ENCODE measurements at regions of chr17 and their contacts with region 1.

Region 1: DNA sequence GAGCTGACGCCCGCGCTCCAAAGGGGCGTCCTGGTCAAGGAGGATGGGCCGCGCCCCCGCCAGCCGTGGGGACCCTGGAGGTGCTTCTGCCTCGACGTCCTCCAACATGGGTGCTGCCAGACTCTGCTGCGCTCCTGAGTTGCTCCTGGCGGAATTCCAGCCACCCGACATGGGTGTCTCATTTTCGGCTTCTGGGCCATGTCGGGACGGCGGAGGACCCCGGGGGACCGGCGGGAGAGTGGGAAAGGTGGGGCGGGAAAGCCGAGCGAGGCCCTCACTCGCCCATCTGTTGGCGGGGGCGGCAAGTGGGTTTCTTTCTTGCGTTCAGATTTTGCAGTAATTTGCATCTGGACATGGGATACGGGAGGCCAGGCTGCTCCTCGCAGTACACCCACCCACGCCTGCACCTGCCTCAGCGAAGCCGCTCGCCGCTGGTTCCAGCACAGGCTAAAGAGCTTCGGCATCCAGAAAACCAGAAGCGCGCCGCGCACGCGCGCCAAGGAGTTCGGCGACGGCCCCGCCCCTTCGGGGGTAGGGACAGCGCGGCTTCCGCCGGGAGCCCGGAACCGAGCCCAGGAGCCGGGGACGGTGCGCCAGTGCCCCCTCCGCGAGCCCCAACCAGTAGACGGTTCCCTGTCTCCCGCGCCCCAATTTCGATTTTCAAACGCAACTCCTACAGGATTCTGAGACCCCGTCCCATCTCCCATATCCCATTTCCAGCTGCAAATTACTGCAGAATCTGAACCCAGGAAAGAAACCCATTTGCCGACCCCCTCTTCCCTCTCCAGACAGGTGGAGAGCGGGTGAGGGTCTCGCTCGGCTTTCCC is at the start of gene ARMC7:
- DNase-seq: peak; percentile 72
- ATAC-seq: peak; percentile 76
- H3K4me3 ChIP-seq: peak within 1 kb of the TSS; percentile 81 to 91
- H3K27ac ChIP-seq: peak within 1 kb of the TSS; percentile 72
- H3K4me1 ChIP-seq: peaks cover 19 to 51% of the 10 kb centered on the region in 2 experiments
- H3K27me3 ChIP-seq: no peaks in the 10 kb centered on the region
- CTCF ChIP-seq: no peak
- POLR2A ChIP-seq: peak; percentile 87
- RAD21 ChIP-seq: peak; percentile 39
- total RNA-seq, gene ARMC7: 43.2 TPM

Region 2: DNA sequence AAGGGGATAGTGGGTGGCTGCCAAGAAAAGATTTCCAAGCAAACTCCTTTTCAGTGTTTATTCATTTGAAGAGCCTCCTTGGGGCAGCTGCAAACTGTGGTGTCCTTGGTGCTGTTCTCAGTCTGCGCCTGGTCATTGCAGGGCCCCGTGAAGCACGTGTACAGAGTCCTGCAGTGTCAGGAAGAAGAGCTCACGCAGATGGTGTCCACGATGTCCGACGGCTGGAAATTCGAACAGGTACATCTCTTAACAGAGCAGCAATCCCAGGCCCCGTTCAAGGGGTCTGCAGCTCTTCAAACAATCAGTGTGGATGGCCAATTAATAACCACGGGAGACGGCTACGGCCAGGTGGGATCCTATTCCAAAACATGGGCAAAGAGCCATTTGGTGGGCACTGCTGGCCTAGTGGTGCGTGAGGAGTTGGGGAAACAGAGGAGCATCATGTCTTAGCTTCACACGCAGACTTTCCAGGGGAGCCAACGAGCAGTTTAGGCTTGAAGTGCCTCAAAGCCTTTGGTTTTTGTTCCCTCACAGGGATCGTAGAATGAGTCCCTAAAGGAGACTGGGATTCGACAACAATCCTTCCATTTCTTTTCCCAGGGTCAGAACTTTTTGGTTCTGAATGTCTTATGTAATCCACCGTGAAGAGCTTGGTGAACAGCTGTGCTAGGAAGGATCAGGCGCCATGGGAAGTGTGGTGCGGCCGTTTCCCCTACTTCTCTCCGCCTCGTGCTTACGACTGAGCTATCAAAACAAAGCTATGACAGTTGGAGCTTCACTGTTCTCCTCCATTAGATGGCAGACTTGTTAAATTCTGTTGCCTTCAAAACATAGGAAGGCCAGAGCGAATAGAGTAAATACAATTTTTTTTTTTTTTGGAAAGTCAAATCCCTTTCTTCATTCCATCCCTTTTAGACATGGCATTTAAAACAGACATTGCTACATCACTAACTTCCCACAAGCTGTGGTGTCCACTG is 50.0 kb before region 1 on chr17:
- CTCF ChIA-PET with region 1: interaction called, 16 read pairs
- POLR2A ChIA-PET with region 1: interaction called, 5 read pairs
- RAD21 ChIA-PET with region 1: interaction called, 4 to 9 read pairs
- intact Hi-C with region 1: loop called (anchors 10 kb)
- DNase-seq: no peak
- ATAC-seq: peak; percentile 67; the same call in 1 of the 2 replicates
- H3K4me3 ChIP-seq: no peak overlapping the region
- H3K27ac ChIP-seq: no peak overlapping the region
- H3K4me1 ChIP-seq: peaks cover 0 to 4% of the 10 kb centered on the region in 2 experiments; a peak in 1 of 4 replicates
- H3K27me3 ChIP-seq: no peaks in the 10 kb centered on the region
- CTCF ChIP-seq: peak; percentile 39 to 54 (median 41); a peak in 5 of 6 replicates
- POLR2A ChIP-seq: no peak
- RAD21 ChIP-seq: peak; percentile 69

Region 3: DNA sequence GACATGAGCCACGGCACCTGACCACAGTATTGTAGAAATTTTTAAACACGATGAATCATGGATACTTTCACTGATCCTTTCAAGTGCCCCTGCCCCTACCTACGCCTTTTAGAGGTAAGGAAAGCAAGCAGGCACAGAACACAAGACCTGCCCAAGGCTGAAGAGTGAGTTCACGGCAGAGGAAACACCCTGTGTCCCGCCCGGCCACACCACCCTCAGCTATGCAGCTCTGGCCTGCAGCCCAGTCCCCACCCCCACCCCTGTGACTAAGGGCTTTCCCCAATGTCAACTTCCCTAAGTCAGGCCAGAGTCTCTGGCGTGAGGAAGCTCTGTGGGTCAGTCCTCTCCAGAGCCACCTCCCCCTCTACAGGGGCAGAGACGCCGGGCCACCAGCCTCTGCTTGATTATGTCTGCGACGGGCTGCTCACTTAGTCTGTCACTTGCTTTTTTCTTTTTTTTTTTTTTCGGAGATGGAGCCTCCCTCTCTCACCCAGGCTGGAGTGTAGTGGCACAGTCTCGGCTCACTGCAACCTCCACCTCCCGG is 13.5 kb before region 1 on chr17:
- CTCF ChIA-PET with region 1: interaction called, 15 read pairs
- POLR2A ChIA-PET with region 1: interaction called, 5 read pairs
- RAD21 ChIA-PET with region 1: interaction called, 3 read pairs
- intact Hi-C with region 1: no loop called
- DNase-seq: peak; percentile 95
- ATAC-seq: peak; percentile 91
- H3K4me3 ChIP-seq: peak overlapping the region; percentile 23 to 32; a peak in 3 of 4 replicates
- H3K27ac ChIP-seq: peak overlapping the region; percentile 94
- H3K4me1 ChIP-seq: peaks cover 55 to 67% of the 10 kb centered on the region in 2 experiments
- H3K27me3 ChIP-seq: no peaks in the 10 kb centered on the region
- CTCF ChIP-seq: no peak
- POLR2A ChIP-seq: no peak
- RAD21 ChIP-seq: no peak

Region 4: DNA sequence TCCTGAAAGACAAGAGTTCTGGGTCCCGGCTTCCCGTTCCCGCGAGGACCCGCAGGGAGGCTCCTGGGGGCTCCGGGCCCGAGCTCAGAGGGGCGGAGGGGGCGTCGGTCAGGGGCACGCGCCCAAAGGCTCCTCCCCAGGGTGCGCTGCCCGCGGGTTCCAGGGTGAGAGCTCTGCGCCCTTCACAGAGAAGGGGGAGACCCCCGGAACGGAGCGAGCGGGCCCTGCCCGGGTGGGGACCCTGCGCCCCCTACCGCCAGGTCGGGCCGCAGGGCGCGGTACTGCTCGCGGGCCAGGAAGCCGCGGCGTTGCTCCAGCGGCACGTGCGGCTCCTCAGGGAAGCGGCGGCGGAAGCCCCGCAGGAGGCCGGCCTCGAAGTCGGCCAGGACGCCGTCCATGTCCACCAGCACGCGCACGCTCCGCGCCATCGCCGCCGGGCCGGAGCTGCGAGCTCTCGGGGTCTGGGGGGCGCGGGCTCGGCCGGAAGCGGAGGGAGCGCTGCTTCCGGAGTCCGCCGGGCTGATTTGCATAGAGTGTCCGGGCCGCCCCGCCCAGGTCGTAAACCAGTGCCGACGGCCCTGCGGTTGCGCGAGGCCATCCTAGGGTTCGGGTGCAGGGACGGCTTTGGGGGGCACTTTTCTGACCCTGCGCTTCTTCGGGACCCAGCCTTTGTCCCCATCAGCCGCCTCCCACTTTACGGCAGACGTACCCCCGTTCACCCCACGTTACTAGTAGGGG is 21.8 kb after region 1 on chr17 and contains the start of gene NT5C:
- CTCF ChIA-PET with region 1: interaction called, 75 read pairs
- POLR2A ChIA-PET with region 1: interaction called, 44 read pairs
- RAD21 ChIA-PET with region 1: interaction called, 3 to 4 read pairs
- intact Hi-C with region 1: loop called (anchors 1 kb)
- DNase-seq: no peak
- ATAC-seq: peak; percentile 82
- H3K4me3 ChIP-seq: peak within 1 kb of the TSS; percentile 85
- H3K27ac ChIP-seq: peak within 1 kb of the TSS; percentile 99
- H3K4me1 ChIP-seq: peaks cover 24 to 68% of the 10 kb centered on the region in 2 experiments; a peak in 3 of 4 replicates
- H3K27me3 ChIP-seq: no peaks in the 10 kb centered on the region
- CTCF ChIP-seq: peak in 2 of 3 experiments; percentile 73 to 91; a peak in 4 of 6 replicates
- POLR2A ChIP-seq: peak; percentile 78
- RAD21 ChIP-seq: no peak
- total RNA-seq, gene NT5C: 115 TPM

Region 5: DNA sequence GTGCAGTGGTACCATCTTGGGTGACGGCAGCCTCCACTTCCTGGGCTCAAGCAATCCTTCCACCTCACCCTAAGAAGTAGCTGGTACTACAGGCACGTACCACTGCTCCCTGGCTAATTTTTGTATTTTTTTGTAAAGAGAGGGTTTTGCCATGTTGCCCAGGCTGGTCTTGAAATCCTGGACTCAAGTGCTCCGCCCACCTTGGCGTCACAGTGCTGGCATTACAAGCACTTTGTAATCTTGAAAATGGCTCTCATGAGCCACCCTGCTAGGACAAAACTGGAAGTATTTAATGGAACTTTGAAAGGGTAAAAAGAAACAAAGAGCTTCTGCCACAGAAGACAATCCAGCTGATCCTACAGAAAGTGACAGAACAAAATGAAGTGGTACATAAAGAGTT is 63.9 kb after region 1 on chr17:
- CTCF ChIA-PET with region 1: interaction called, 58 read pairs
- POLR2A ChIA-PET with region 1: interaction called, 8 read pairs
- RAD21 ChIA-PET with region 1: interaction called, 7 to 11 read pairs
- intact Hi-C with region 1: loop called (anchors 1 kb)
- DNase-seq: no peak
- ATAC-seq: no peak
- H3K4me3 ChIP-seq: no peak overlapping the region
- H3K27ac ChIP-seq: no peak overlapping the region; the same call in 1 of the 2 replicates
- H3K4me1 ChIP-seq: peaks cover 0 to 7% of the 10 kb centered on the region in 2 experiments; a peak in 1 of 4 replicates
- H3K27me3 ChIP-seq: no peaks in the 10 kb centered on the region
- CTCF ChIP-seq: no peak
- POLR2A ChIP-seq: no peak
- RAD21 ChIP-seq: no peak

Region 6: DNA sequence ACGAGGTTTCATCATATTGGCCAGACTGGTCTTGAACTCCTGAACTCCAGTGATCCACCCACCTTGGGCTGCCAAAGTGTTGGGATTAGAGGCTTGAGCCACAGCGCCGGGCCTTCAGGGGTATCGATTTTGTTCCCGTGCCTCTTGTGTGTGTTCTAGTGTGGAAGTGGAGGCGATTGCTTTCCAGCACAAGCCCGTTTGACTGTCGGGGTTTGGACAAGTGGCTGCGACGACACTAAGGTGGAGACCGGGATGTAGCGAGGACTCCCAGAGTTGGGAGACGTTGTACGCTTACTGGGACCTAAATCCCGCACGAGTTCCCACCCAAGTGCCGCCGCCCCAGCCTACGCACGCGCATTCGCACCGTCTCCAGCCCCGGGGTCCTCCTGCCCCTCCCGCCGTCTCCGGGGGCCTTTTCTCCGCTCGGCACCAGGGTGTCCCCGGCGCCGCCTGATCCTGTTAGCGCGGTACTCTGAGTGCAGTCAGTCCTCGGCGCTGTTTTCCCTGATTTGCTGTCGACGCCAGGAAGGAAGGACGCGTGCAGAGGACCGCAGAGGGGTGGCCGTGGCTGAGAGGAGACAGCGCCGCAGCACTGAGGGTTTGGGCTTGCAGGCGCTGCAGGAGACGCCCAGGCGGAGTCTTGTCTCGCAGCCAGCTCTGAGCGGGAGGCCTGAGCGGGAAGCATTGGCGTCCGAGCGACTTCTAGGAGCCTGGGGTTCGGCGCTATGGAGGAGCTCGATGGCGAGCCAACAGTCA is 95.6 kb after region 1 on chr17 and contains the start of gene NUP85:
- CTCF ChIA-PET with region 1: interaction called, 104 read pairs
- POLR2A ChIA-PET with region 1: interaction called, 8 read pairs
- RAD21 ChIA-PET with region 1: interaction called, 6 to 22 read pairs
- intact Hi-C with region 1: loop called (anchors 1 kb)
- DNase-seq: peak; percentile 96
- ATAC-seq: peak; percentile 87
- H3K4me3 ChIP-seq: peak within 1 kb of the TSS; percentile 75 to 85
- H3K27ac ChIP-seq: peak within 1 kb of the TSS; percentile 85
- H3K4me1 ChIP-seq: peaks cover 11 to 27% of the 10 kb centered on the region in 2 experiments
- H3K27me3 ChIP-seq: no peaks in the 10 kb centered on the region
- CTCF ChIP-seq: no peak
- POLR2A ChIP-seq: peak; percentile 98
- RAD21 ChIP-seq: no peak
- total RNA-seq, gene NUP85: 164 TPM

Region 7: DNA sequence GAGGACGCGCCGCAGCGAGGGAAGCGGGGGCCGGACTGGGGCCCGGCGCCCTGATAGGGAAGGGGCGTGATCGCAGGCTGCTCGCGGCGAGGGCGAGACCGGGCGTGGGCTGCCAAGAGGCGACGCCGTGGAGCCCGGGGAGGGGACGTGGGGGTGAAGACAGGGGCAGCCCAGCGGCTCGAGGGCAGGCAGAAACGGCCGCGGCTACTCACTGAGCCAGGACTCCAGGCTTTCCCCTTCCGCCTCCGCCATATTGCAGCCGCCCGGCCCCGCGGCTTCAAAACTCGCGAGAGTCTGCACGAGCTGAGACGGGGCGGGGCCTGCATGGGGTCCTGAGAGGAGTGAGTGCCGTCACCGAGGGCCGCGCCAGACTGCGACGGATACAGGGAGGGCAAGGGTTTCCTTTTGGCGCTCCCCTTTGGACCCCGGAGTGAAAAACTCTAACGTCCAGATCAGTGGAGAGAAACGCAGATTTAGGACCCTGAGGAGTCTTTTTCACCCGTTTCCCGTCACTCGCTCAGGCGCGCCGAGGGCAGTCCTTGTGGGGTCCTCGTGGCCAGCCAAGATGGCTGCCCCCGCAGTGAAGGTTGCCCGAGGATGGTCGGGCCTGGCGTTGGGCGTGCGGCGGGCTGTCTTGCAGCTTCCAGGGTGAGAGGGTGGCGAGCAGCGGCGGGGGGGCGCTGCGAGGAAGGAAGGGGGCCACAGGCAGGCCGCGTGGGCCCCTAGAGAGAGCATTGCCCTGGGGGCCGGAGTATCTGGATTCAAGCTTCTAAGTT is 151.9 kb after region 1 on chr17 and contains the starts of genes GGA3 and MRPS7:
- CTCF ChIA-PET with region 1: interaction called, 3 read pairs
- POLR2A ChIA-PET with region 1: interaction called, 3 read pairs
- RAD21 ChIA-PET with region 1: no interaction called
- intact Hi-C with region 1: loop called (anchors 10 kb)
- DNase-seq: peak; percentile 89
- ATAC-seq: peak; percentile 95
- H3K4me3 ChIP-seq: peak within 1 kb of the TSS; percentile 83 to 97
- H3K27ac ChIP-seq: peak within 1 kb of the TSS; percentile 80
- H3K4me1 ChIP-seq: peaks cover 17 to 21% of the 10 kb centered on the region in 2 experiments
- H3K27me3 ChIP-seq: no peaks in the 10 kb centered on the region
- CTCF ChIP-seq: no peak
- POLR2A ChIP-seq: no peak
- RAD21 ChIP-seq: no peak; the same call in 1 of the 2 replicates
- total RNA-seq, gene GGA3: 58.3 TPM
- total RNA-seq, gene MRPS7: 104 TPM